A673 (cell line): ENCODE measurements at regions of chr6 and their contacts with region 1.

Region 1: GRCh38 chr6:100664274-100665040 is 199.7 kb upstream of the SIM1 start:
- DNase-seq: peak; percentile 42
- H3K4me3 ChIP-seq: no peak overlapping the region
- H3K27ac ChIP-seq: no peak overlapping the region
- H3K4me1 ChIP-seq: no peaks in the 10 kb centered on the region
- H3K27me3 ChIP-seq: no peaks in the 10 kb centered on the region
- CTCF ChIP-seq: peak; percentile 79

Region 2: GRCh38 chr6:100105138-100105753 is 559.2 kb before region 1 on chr6:
- CTCF ChIA-PET with region 1: no interaction called
- POLR2A ChIA-PET with region 1: no interaction called
- intact Hi-C with region 1: loop called (anchors 5 kb)
- DNase-seq: no peak
- H3K4me3 ChIP-seq: no peak overlapping the region
- H3K27ac ChIP-seq: no peak overlapping the region
- H3K4me1 ChIP-seq: peaks cover 17% of the 10 kb centered on the region
- H3K27me3 ChIP-seq: no peaks in the 10 kb centered on the region
- CTCF ChIP-seq: no peak